ENCODE measurements at regions of chr3 and their contacts with region 1.

Region 1: GRCh38 chr3:11643605-11644087 is at the start of gene VGLL4:
- DNase-seq: peak; percentile 94
- ATAC-seq: peak; percentile 90
- H3K4me3 ChIP-seq: peak within 1 kb of the TSS; percentile 35 to 71
- H3K27ac ChIP-seq: peak within 1 kb of the TSS; percentile 24 to 57
- H3K4me1 ChIP-seq: peaks cover 5% of the 10 kb centered on the region in 2 donors
- H3K27me3 ChIP-seq: no peaks in the 10 kb centered on the region
- total RNA-seq, gene VGLL4: 93.5 to 104 TPM

Region 2: GRCh38 chr3:11379233-11379823 is 264.3 kb before region 1 on chr3:
- intact Hi-C with region 1: loop called in 1 of 2 experiments (anchors 5 kb)
- DNase-seq: no peak
- ATAC-seq: peak; percentile 85
- H3K4me3 ChIP-seq: peak overlapping the region in 1 of 2 donors; percentile 72
- H3K27ac ChIP-seq: peak overlapping the region; percentile 44 to 76
- H3K4me1 ChIP-seq: peaks cover 0 to 2% of the 10 kb centered on the region in 2 donors
- H3K27me3 ChIP-seq: no peaks in the 10 kb centered on the region

Region 3: DNA sequence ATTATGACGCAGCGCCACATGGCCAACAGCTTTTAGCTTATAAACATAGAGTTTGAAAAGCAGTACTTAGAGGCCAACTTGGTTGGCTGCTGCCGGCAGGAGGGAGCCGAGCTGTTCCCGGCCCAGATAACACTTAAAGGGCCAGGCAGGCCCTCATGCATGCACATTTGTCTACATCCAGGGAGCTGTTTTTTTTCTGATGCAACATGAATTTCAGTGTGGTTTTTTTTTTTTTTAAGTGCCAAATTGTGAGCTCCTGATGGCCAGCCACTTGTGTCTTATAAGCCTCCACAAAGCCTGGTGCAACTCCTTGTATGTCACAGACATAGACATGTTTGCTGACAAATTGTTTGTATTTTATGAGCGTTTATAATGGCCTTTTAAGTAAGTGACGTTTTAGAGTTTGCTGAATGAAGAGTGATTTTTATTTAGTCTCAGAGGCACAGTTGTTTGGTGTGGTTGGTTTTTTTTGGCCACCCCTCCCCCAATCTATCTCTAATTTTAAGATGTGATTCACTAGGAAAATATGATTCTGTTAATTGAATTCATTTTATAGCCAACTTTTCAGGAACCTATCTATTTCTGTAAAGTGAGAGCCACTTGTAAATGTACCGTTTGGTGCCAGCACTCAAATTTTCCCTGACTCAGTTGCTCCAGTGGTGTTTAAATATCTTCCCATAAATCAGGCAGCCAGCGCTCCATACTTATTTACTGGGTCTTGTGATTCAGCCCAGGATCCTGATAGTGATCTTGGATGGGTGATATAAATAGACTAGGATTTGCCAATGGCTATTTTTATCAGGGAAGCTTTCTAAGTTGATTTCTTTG is 134.3 kb before region 1 on chr3:
- intact Hi-C with region 1: loop called in 1 of 2 experiments (anchors 5 kb)
- DNase-seq: peak; percentile 86 to 87
- ATAC-seq: peak; percentile 94
- H3K4me3 ChIP-seq: peak overlapping the region in 1 of 2 donors; percentile 13
- H3K27ac ChIP-seq: peak overlapping the region; percentile 62 to 98
- H3K4me1 ChIP-seq: peaks cover 9 to 11% of the 10 kb centered on the region in 2 donors
- H3K27me3 ChIP-seq: no peaks in the 10 kb centered on the region

Region 4: GRCh38 chr3:11556851-11557644 is 86.6 kb before region 1 on chr3:
- intact Hi-C with region 1: loop called in 1 of 2 experiments (anchors 5 kb)
- DNase-seq: peak; percentile 74 to 76
- ATAC-seq: no peak
- H3K4me3 ChIP-seq: no peak overlapping the region
- H3K27ac ChIP-seq: no peak overlapping the region
- H3K4me1 ChIP-seq: no peaks in the 10 kb centered on the region
- H3K27me3 ChIP-seq: no peaks in the 10 kb centered on the region

Region 5: DNA sequence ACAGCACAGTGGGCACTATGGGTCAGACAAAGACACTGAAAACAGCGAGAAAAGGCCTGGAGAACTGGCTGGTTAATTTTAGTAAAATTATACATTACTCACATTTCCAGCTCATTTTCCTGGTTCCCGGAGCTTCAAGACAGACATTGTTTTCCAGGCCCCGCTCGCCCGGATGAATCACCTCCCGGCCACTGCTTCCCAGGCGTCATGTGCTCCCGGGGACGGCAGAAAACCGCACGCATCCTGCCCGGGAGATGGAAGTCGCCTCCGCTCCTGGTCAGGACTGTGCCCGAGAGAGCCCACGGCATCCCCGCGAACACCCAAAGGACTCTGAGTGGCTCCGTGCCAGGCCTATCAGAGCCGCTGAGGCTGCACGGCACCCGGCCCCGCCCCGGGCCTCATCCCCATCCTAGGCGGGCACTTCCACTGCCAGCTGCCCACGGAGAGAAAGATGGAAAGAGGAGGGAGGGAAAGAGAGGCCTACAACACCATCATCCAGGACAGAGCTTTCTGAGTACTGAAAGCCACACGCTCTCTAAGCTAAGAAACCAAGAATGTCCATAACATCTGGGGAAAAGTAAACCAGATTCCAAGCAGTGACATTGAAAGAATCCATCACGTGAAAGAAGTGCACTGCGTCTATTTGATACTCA is 75.0 kb before region 1 on chr3:
- intact Hi-C with region 1: loop called (anchors 2 to 5 kb)
- DNase-seq: peak; percentile 94 to 97
- ATAC-seq: peak; percentile 91
- H3K4me3 ChIP-seq: no peak overlapping the region
- H3K27ac ChIP-seq: peak overlapping the region; percentile 90 to 99
- H3K4me1 ChIP-seq: peaks cover 0 to 2% of the 10 kb centered on the region in 2 donors
- H3K27me3 ChIP-seq: no peaks in the 10 kb centered on the region

Region 6: GRCh38 chr3:11582191-11582968 is 61.3 kb before region 1 on chr3:
- intact Hi-C with region 1: loop called in 1 of 2 experiments (anchors 5 kb)
- DNase-seq: peak; percentile 73 to 83
- ATAC-seq: peak; percentile 80
- H3K4me3 ChIP-seq: peak overlapping the region in 1 of 2 donors; percentile 22
- H3K27ac ChIP-seq: peak overlapping the region in 1 of 2 donors; percentile 82
- H3K4me1 ChIP-seq: peaks cover 2 to 3% of the 10 kb centered on the region in 2 donors
- H3K27me3 ChIP-seq: no peaks in the 10 kb centered on the region

Region 7: DNA sequence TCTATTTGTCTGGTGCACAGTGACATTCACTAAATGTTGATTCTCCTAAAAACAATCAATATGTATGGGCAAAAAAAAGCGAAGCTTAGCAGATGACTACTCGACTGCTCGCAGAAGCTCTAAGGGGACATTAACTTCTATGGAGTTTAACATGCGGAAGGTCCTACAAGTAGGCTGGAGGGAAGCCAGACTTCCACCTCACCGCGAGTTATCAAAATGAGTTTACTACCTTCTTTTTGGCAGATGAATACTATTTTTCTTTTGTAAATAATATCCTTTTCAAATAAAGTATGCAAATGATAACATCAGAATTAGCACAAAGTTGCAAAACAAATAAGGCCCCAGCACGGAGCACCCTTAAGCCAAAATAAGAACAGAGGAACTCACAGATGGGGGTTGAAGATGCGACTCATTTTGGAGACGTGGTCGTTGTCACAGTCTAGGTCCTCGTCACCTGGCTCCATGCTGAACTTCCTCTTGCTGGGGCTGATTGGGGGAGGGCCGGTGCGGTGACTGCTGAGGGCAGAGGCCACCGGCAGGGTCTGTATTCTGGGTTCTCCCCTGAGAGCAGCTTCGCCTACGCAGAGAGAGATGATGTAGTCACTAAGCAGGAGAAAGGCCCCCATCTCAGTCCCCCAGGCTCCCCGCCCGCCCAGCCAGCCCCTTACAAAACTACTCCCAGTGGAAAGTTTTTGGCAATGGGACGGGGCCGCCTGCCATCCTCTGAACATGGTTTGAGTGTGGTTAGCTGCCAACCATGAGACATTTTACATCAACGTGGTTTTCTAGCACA is 42.0 kb before region 1 on chr3:
- intact Hi-C with region 1: loop called (anchors 2 to 5 kb)
- DNase-seq: peak; percentile 86 to 93
- ATAC-seq: peak; percentile 76
- H3K4me3 ChIP-seq: peak overlapping the region in 1 of 2 donors; percentile 11
- H3K27ac ChIP-seq: peak overlapping the region; percentile 84 to 99
- H3K4me1 ChIP-seq: peaks cover 3 to 11% of the 10 kb centered on the region in 2 donors
- H3K27me3 ChIP-seq: no peaks in the 10 kb centered on the region

Region 8: GRCh38 chr3:11735638-11736037 is 92.0 kb after region 1 on chr3:
- intact Hi-C with region 1: no loop called
- DNase-seq: peak in 1 of 2 donors; percentile 8
- ATAC-seq: no peak
- H3K4me3 ChIP-seq: no peak overlapping the region
- H3K27ac ChIP-seq: no peak overlapping the region
- H3K4me1 ChIP-seq: no peaks in the 10 kb centered on the region
- H3K27me3 ChIP-seq: no peaks in the 10 kb centered on the region

Measured in aorta (tissue), 5 donors.